BJ (cell line): ENCODE measurements at regions of chr6 and their contacts with region 1.

Region 1: GRCh38 chr6:89432875-89433251 is at the start of gene ANKRD6:
- DNase-seq: no peak
- H3K4me3 ChIP-seq: peak within 1 kb of the TSS; percentile 48
- H3K27me3 ChIP-seq: peaks cover 6% of the 10 kb centered on the region
- CTCF ChIP-seq: peak; percentile 64
- polyA plus RNA-seq, gene ANKRD6: 0.61 and 1.1 TPM in 2 replicates

Region 2: GRCh38 chr6:89416796-89417195 is 16.1 kb before region 1 on chr6:
- CTCF ChIA-PET with region 1: interaction called, 10 read pairs
- POLR2A ChIA-PET with region 1: no interaction called
- DNase-seq: no peak
- H3K4me3 ChIP-seq: no peak overlapping the region
- H3K27me3 ChIP-seq: peaks cover 19% of the 10 kb centered on the region
- CTCF ChIP-seq: no peak